ENCODE measurements at regions of chr18 and their contacts with region 1.

Region 1: GRCh38 chr18:13726232-13726971 is at the starts of genes FAM210A and RNMT:
- DNase-seq: peak; percentile 82 to 98 (median 94)
- ATAC-seq: peak; percentile 91
- H3K4me3 ChIP-seq: peak within 1 kb of the TSS; percentile 74 to 87
- H3K4me3 Mint-ChIP-seq: peak within 1 kb of the TSS; percentile 80
- H3K27ac ChIP-seq: peak within 1 kb of the TSS; percentile 90 to 93
- H3K27ac Mint-ChIP-seq: peak within 1 kb of the TSS; percentile 99
- H3K4me1 ChIP-seq: peaks cover 41% of the 10 kb centered on the region
- H3K4me1 Mint-ChIP-seq: peaks cover 64% of the 10 kb centered on the region
- H3K27me3 ChIP-seq: no peaks in the 10 kb centered on the region
- H3K27me3 Mint-ChIP-seq: no peaks in the 10 kb centered on the region
- CTCF ChIP-seq: no peak
- total RNA-seq, gene FAM210A: 8.3 to 9.1 TPM
- total RNA-seq, gene RNMT: 159 to 160 TPM

Region 2: DNA sequence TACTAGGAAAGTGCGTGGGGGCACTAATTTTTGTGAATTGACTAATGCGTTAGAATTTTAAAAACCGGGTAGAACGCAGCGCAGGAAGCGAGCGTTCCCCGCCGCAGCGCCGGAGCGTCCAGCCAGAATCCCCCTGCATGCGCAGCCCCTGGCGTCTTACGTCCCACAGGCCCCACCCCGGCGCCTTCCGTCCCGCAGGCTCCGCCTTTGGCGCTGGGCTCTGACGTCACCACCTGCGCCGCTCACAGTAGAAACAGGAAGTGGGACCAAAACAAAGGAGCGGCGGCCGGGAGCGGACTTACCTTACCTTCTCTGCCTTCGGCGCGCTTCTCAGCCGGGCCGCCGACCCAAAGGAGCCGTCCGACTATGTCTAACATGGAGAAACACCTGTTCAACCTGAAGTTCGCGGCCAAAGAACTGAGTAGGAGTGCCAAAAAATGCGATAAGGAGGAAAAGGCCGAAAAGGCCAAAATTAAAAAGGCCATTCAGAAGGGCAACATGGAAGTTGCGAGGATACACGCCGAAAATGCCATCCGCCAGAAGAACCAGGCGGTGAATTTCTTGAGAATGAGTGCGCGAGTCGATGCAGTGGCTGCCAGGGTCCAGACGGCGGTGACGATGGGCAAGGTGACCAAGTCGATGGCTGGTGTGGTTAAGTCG is 1875.1 kb before region 1 on chr18 and contains the start of gene CHMP1B:
- CTCF ChIA-PET with region 1: no interaction called
- POLR2A ChIA-PET with region 1: no interaction called
- intact Hi-C with region 1: loop called (anchors 5 kb)
- DNase-seq: peak; percentile 93 to 99 (median 98)
- ATAC-seq: peak; percentile 83
- H3K4me3 ChIP-seq: peak within 1 kb of the TSS; percentile 94 to 99
- H3K4me3 Mint-ChIP-seq: peak within 1 kb of the TSS; percentile 100
- H3K27ac ChIP-seq: peak within 1 kb of the TSS; percentile 96 to 99
- H3K27ac Mint-ChIP-seq: peak within 1 kb of the TSS; percentile 100
- H3K4me1 ChIP-seq: peaks cover 25% of the 10 kb centered on the region
- H3K4me1 Mint-ChIP-seq: peaks cover 50% of the 10 kb centered on the region
- H3K27me3 ChIP-seq: no peaks in the 10 kb centered on the region
- H3K27me3 Mint-ChIP-seq: no peaks in the 10 kb centered on the region
- CTCF ChIP-seq: no peak
- total RNA-seq, gene CHMP1B: 71.2 to 74.2 TPM

Region 3: GRCh38 chr18:12408247-12408869 is 1318.0 kb before region 1 on chr18:
- CTCF ChIA-PET with region 1: no interaction called
- POLR2A ChIA-PET with region 1: no interaction called
- intact Hi-C with region 1: loop called in 1 of 2 experiments (anchors 10 kb)
- DNase-seq: peak in 3 of 9 experiments; percentile 31 to 52 (median 42)
- ATAC-seq: peak; percentile 9
- H3K4me3 ChIP-seq: peak overlapping the region in 1 of 2 experiments; percentile 71
- H3K4me3 Mint-ChIP-seq: peak overlapping the region; percentile 72
- H3K27ac ChIP-seq: no peak overlapping the region
- H3K27ac Mint-ChIP-seq: peak overlapping the region; percentile 30
- H3K4me1 ChIP-seq: peaks cover 18% of the 10 kb centered on the region
- H3K4me1 Mint-ChIP-seq: peaks cover 21% of the 10 kb centered on the region
- H3K27me3 ChIP-seq: no peaks in the 10 kb centered on the region
- H3K27me3 Mint-ChIP-seq: peaks cover 10% of the 10 kb centered on the region
- CTCF ChIP-seq: no peak

Region 4: DNA sequence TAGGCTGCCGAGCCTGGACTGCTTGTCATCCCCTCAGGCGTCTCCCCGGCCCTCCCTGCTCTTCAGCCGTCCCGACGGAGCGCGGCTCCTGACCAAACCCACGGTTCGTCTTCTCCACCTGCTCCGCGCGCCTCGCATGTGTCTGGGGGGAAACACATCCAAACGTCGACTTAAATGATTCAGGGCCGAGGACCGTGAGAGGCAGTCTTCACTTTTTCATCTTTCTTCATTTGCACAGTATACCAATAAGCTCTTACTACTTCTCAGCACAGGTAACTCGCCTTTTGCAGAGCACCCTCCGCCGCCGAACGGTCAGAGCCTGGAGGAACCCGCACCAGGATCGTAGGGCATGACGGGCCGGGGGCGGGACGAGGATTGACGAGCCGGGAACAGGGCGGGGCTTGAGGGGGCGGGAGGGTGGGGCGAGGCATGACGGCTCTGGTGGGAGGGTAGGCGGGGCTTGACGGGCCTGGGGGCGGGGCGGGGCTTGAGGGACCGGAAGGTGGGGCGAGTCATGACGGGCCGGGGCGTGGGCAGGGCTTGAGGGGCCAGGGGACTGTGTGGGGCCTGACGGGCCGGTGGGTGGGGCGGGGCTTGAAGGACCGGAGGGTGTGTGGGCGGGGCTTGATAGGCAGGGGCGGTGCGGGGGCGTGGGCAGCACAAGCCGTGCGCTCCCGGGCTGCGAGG is 778.9 kb before region 1 on chr18 and contains the start of gene SEH1L:
- CTCF ChIA-PET with region 1: no interaction called
- POLR2A ChIA-PET with region 1: no interaction called
- intact Hi-C with region 1: loop called (anchors 1 kb)
- DNase-seq: peak; percentile 97 to 99 (median 99)
- ATAC-seq: peak; percentile 82
- H3K4me3 ChIP-seq: peak within 1 kb of the TSS; percentile 66 to 91
- H3K4me3 Mint-ChIP-seq: peak within 1 kb of the TSS; percentile 96
- H3K27ac ChIP-seq: peak within 1 kb of the TSS; percentile 83 to 85
- H3K27ac Mint-ChIP-seq: peak within 1 kb of the TSS; percentile 99
- H3K4me1 ChIP-seq: peaks cover 22% of the 10 kb centered on the region
- H3K4me1 Mint-ChIP-seq: peaks cover 39% of the 10 kb centered on the region
- H3K27me3 ChIP-seq: no peaks in the 10 kb centered on the region
- H3K27me3 Mint-ChIP-seq: no peaks in the 10 kb centered on the region
- CTCF ChIP-seq: no peak
- total RNA-seq, gene SEH1L: 23.9 to 27.6 TPM

Region 5: GRCh38 chr18:13216092-13216582 is 510.3 kb before region 1 on chr18:
- CTCF ChIA-PET with region 1: interaction called, 3 read pairs
- POLR2A ChIA-PET with region 1: interaction called, 3 read pairs
- intact Hi-C with region 1: loop called (anchors 1 to 2 kb)
- DNase-seq: peak in 8 of 9 experiments; percentile 24 to 76 (median 54)
- ATAC-seq: peak; percentile 47
- H3K4me3 ChIP-seq: peak overlapping the region in 1 of 2 experiments; percentile 39
- H3K4me3 Mint-ChIP-seq: peak overlapping the region; percentile 96
- H3K27ac ChIP-seq: no peak overlapping the region
- H3K27ac Mint-ChIP-seq: peak overlapping the region; percentile 93
- H3K4me1 ChIP-seq: peaks cover 26% of the 10 kb centered on the region
- H3K4me1 Mint-ChIP-seq: peaks cover 31% of the 10 kb centered on the region
- H3K27me3 ChIP-seq: peaks cover 0 to 5% of the 10 kb centered on the region in 2 experiments
- H3K27me3 Mint-ChIP-seq: peaks cover 20% of the 10 kb centered on the region
- CTCF ChIP-seq: peak; percentile 61

Region 6: GRCh38 chr18:13558124-13558523 is 168.3 kb before region 1 on chr18:
- CTCF ChIA-PET with region 1: interaction called, 3 read pairs
- POLR2A ChIA-PET with region 1: no interaction called
- intact Hi-C with region 1: loop called in 1 of 2 experiments (anchors 2 kb)
- DNase-seq: peak in 7 of 9 experiments; percentile 18 to 60 (median 39)
- ATAC-seq: peak; percentile 54
- H3K4me3 ChIP-seq: no peak overlapping the region
- H3K4me3 Mint-ChIP-seq: no peak overlapping the region
- H3K27ac ChIP-seq: no peak overlapping the region
- H3K27ac Mint-ChIP-seq: no peak overlapping the region
- H3K4me1 ChIP-seq: peaks cover 7% of the 10 kb centered on the region
- H3K4me1 Mint-ChIP-seq: peaks cover 18% of the 10 kb centered on the region
- H3K27me3 ChIP-seq: no peaks in the 10 kb centered on the region
- H3K27me3 Mint-ChIP-seq: no peaks in the 10 kb centered on the region
- CTCF ChIP-seq: peak; percentile 68

Region 7: DNA sequence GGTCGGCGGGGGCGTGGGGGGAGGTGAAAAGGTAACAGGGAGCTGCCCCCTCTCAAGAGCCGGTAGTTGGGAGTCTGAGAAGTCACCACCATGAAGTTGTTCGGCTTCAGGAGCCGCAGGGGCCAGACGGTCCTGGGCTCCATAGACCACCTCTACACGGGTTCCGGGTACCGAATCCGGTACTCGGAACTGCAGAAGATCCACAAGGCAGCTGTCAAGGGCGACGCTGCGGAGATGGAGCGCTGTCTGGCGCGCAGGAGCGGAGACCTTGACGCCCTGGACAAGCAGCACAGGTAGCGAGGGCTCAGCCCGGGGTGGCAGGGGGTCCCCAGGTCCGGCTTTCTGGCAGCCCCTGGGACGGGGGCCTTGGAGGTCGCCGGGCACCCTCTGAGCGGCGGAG is 452.9 kb after region 1 on chr18:
- CTCF ChIA-PET with region 1: no interaction called
- POLR2A ChIA-PET with region 1: no interaction called
- intact Hi-C with region 1: loop called in 1 of 2 experiments (anchors 5 kb)
- DNase-seq: peak in 3 of 9 experiments; percentile 30 to 58 (median 48)
- ATAC-seq: peak; percentile 26
- H3K4me3 ChIP-seq: peak overlapping the region; percentile 61 to 62
- H3K4me3 Mint-ChIP-seq: peak overlapping the region; percentile 88
- H3K27ac ChIP-seq: no peak overlapping the region
- H3K27ac Mint-ChIP-seq: peak overlapping the region; percentile 79
- H3K4me1 ChIP-seq: peaks cover 4% of the 10 kb centered on the region
- H3K4me1 Mint-ChIP-seq: peaks cover 11% of the 10 kb centered on the region
- H3K27me3 ChIP-seq: no peaks in the 10 kb centered on the region
- H3K27me3 Mint-ChIP-seq: no peaks in the 10 kb centered on the region
- CTCF ChIP-seq: no peak

Measured in CD8-positive, alpha-beta T cell (primary cell).